ENCODE measurements at regions of chr15 and their contacts with region 1.

Region 1: DNA sequence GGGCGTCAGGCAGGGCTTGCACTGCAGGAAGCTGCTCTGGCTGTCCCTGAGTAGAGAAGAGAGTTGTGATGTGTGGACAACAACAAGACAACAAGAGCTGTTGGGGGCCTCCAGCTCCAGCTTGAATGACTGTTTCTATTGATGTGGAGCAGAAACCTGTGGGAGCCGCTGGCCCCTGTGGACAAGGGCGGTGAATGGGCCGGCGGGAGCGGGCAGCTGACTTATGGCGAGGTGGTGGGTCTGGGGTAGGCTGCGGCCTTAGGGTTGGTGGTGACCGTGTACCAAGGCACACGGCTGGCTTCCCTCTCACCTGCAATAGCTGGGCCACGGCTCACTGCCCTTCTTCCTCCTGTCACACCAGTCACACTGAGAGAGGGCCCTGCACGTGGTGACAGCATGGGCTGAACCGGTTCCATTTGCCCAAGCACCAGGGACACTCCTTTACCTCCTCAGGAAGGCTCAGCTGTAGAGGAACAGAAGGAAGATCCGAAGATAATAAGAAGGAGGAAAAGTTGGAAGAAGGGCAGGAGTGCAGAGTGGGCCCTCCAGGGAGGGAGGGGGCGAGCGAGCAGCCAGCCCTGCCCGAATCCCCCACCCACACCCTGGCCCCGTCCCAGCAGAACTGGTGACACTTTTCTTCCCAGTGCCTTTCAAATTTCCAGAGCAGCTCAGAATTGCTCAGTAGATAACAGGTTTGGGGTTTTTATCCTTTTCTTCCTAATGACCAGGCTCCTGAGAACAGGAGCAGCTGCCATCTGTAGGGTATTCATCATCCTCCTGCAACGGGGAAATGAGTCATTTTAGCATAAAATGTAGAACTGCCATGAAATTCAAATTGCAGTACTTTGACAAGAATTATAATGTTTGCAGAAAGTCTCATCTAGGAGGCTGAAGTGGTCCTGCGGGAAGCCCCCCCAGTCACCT is 136.9 kb downstream of the TJP1 start:
- DNase-seq: no peak
- ATAC-seq: no peak
- H3K4me3 ChIP-seq: no peak overlapping the region
- H3K27ac ChIP-seq: no peak overlapping the region
- H3K4me1 ChIP-seq: no peaks in the 10 kb centered on the region
- H3K27me3 ChIP-seq: no peaks in the 10 kb centered on the region
- CTCF ChIP-seq: no peak

Region 2: GRCh38 chr15:29352402-29352801 is 333.0 kb before region 1 on chr15:
- intact Hi-C with region 1: no loop called
- DNase-seq: no peak
- ATAC-seq: no peak
- H3K4me3 ChIP-seq: no peak overlapping the region
- H3K27ac ChIP-seq: no peak overlapping the region
- H3K4me1 ChIP-seq: no peaks in the 10 kb centered on the region
- H3K27me3 ChIP-seq: peaks cover 0 to 18% (median 6%) of the 10 kb centered on the region in 7 donors
- CTCF ChIP-seq: no peak

Region 3: DNA sequence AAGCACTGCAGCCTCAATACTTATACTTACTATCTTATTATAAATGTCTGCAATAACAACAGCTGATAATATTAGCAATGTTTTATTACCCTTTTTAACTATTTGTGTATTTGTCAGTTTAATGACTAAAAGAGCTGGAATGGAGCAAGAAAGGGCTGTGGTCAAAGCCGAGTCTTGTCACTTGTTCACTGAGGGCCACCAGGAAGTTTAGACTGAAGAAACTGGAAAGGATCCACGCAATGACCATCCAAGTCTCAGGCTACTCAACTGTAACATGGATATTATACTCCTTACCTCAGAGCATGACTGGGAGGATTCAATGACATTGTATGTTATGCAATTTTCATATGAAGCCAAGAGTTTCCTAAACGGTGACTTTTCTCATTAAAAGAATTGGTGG is 46.4 kb after region 1 on chr15:
- intact Hi-C with region 1: no loop called
- DNase-seq: no peak
- ATAC-seq: no peak
- H3K4me3 ChIP-seq: no peak overlapping the region
- H3K27ac ChIP-seq: no peak overlapping the region
- H3K4me1 ChIP-seq: peaks cover 0 to 33% (median 13%) of the 10 kb centered on the region in 9 donors
- H3K27me3 ChIP-seq: no peaks in the 10 kb centered on the region
- CTCF ChIP-seq: no peak

Region 4: DNA sequence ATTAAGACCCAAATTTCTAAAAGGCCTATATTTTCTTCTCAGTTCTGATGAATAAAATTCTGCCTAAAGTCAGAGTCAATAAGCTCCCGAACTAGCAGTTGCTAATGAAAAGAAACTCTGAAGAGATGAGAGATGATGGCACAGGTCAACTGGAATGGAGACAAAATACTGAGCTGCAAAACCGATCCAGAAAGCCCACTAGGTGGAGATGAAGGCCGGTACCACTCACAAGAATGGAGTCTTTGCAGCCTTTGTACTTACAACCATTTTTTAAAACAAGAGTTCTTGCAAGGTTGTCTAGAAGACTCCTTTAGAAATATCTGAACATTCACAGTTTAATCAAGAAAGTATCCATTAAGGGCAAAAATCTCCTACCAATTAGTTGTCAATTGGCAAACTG is 256.7 kb after region 1 on chr15:
- intact Hi-C with region 1: loop called in 1 of 10 experiments (anchors 5 kb)
- DNase-seq: no peak
- ATAC-seq: peak in 1 of 8 donors; percentile 49
- H3K4me3 ChIP-seq: no peak overlapping the region
- H3K27ac ChIP-seq: no peak overlapping the region
- H3K4me1 ChIP-seq: peaks cover 0 to 1% (median 0%) of the 10 kb centered on the region in 9 donors
- H3K27me3 ChIP-seq: no peaks in the 10 kb centered on the region
- CTCF ChIP-seq: peak in 8 of 9 donors; percentile 11 to 51 (median 34)

Region 5: DNA sequence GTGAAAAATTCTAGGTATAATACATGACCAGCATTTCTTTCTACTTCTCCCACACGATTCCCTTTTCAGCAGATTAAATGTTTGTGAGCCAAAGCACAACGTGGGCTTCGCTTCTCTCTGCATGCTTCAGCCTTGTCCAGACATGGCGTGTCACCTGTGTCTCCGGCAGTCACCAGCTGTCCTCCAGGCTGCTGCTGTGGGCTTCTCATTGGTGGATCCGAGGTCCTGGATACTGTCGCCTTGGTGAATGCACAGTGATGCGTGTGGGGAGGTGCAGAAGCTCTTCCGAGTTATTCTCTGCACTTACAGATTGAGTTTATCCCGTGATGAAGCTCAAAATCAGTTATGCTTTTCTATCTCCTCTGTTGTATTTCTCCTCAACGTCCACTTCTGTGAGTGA is 374.4 kb after region 1 on chr15:
- intact Hi-C with region 1: loop called in 1 of 10 experiments (anchors 10 kb)
- DNase-seq: no peak
- ATAC-seq: no peak
- H3K4me3 ChIP-seq: no peak overlapping the region
- H3K27ac ChIP-seq: no peak overlapping the region
- H3K4me1 ChIP-seq: peaks cover 0 to 7% (median 0%) of the 10 kb centered on the region in 9 donors
- H3K27me3 ChIP-seq: peaks cover 0 to 4% (median 0%) of the 10 kb centered on the region in 7 donors
- CTCF ChIP-seq: no peak